ENCODE measurements at regions of chr9 and their contacts with region 1.

Region 1: GRCh38 chr9:100322954-100323536 is 29.7 kb downstream of the TEX10 start:
- DNase-seq: peak; percentile 53
- ATAC-seq: no peak
- H3K4me3 Mint-ChIP-seq: no peak overlapping the region
- H3K27ac Mint-ChIP-seq: no peak overlapping the region
- H3K4me1 Mint-ChIP-seq: peaks cover 5% of the 10 kb centered on the region
- H3K27me3 Mint-ChIP-seq: no peaks in the 10 kb centered on the region

Region 2: DNA sequence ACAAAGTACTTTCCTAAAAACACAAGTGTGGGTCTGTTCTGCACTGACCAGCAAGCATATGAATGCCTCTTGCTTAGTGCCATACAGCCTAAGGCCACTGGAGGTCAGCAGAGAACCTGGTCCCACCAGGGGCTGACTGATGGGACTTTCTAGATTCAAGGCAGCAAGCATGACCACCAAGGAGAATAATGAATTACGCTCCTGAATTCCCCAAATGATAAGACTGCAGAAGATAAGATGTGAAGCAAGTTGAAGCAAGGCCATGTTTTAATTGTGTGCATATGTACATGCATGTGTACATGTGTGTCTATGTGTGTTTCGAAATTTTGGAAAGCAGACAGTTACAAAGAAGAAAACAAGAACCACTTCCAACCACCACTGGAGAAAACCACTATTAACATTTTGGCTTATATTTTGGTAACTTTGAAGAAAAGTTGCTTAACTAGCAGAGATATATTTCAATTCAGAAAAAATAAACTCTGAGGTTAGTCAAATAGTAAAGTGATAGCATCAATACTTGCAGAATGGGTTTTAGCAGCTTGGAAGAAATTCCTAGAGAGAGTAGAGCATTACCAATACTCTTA is 294.8 kb before region 1 on chr9:
- CTCF ChIA-PET with region 1: interaction called, 14 read pairs
- DNase-seq: peak; percentile 85
- ATAC-seq: peak; percentile 95
- H3K4me3 Mint-ChIP-seq: no peak overlapping the region
- H3K27ac Mint-ChIP-seq: no peak overlapping the region
- H3K4me1 Mint-ChIP-seq: peaks cover 13% of the 10 kb centered on the region
- H3K27me3 Mint-ChIP-seq: no peaks in the 10 kb centered on the region

Region 3: DNA sequence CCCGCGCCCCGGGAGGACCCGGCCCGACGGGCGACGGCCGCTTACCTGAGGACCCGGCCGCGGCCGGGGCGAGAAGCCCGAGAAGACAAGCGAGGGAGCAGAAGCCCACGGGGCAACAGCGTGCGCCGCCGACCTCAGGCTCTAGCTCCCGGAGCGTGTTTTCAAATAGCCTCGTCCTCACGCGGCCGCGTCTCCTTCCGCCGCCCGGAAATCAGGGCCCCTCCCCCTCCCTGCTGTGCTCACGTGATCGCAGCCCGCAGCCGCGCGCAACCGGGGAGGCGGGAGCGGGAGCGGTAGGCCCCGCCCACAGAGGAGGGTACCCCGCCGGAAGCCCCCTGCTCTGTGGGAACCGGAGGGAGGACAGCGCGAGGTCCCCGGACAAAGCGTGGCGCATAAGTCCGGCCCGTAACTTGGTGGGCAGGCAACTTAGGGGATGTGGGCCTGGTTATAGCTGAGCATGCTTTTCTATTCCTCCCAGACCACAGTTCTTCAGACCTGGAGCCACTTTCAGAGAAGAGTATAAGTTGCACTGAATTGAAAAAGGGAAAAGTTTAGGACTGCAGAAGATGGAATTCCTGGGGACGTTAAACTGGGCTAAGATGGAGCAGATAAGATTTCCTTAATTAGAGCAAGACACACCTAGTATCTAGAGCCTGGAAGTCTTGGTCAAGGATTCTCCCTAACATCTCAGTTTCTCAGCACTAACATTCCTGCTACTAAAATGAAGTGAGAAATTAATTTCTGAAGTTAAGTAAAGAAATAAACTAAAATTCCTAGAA is 29.9 kb after region 1 on chr9 and contains the start of gene TEX10:
- CTCF ChIA-PET with region 1: interaction called, 30 read pairs
- DNase-seq: peak; percentile 91
- ATAC-seq: peak; percentile 88
- H3K4me3 Mint-ChIP-seq: peak within 1 kb of the TSS; percentile 98
- H3K27ac Mint-ChIP-seq: peak within 1 kb of the TSS; percentile 90
- H3K4me1 Mint-ChIP-seq: peaks cover 48% of the 10 kb centered on the region
- H3K27me3 Mint-ChIP-seq: no peaks in the 10 kb centered on the region
- total RNA-seq, gene TEX10: 21.0 to 24.4 TPM

Measured in activated CD8-positive, alpha-beta memory T cell treated with anti-CD3 and anti-CD28 coated beads, Interleukin-2, amount 10 ng/mL, durations not matched to agents 7 days and 5 days (primary cell).